G401 (cell line): ENCODE measurements at regions of chr1 and their contacts with region 1.

Region 1: DNA sequence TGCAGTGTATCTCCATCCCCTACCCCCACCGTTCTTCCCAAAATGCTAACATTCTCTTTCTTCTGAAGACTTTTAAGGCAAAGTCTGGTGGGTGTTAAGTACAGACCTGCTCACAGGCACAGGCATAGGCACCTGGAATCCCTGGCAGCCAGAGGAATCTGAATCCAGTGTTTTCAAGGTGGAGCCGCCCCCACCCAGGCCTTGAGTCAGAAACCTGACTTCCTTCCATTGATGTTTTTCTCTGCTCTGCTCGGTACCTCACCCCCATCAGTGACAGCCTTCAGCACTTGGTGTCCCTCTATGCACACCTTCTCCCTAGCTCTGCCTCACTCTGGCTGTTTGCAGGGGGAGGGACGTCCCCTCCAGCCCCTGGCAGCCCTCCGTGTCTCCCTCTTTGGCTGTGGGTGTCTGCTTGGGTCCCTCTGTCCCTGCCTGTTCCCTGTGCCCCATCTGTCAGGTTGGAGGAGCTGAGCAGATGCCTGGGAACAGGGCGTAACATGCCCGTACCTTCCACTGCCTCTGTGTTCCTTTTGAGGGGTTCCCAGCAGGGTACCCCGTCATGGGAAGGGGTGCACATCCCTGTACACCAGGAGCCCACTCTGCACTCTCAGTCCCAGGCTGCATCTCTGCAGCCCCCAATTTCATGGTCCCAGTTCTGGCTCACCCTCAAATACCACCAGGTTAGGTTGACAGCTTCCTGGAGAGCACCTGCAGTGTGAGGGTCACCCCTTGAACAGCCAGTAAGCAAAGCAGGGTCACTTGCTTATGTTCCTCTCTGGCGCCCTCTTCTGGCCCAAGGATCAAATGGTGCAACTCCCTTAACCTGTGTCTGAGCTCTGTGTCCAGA is 6.7 kb downstream of the NCDN start:
- DNase-seq: peak; percentile 79

Region 2: DNA sequence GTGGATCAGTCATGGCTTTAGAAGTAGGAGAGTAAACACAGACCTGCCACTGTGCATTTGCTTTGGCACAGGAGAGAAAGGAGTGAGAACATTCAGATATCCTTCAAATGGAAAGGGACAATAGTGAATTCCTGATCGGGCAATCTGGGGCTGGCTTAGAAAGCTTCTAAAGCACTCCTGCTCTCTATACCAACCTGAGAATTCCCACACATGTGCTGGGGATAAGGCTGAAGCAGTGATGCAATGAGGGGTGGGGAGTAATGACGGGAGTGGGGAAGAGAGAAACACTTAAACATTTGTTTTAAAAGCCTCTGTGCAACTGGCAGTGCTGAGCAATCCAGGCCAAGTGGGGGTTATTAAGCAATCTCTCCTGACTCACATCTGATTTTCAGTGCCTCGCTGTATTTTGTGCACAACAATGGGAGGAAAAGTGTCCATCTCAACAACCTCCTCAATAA is 115.9 kb before region 1 on chr1:
- in situ Hi-C with region 1: loop called (anchors 10 kb)
- DNase-seq: no peak

Region 3: DNA sequence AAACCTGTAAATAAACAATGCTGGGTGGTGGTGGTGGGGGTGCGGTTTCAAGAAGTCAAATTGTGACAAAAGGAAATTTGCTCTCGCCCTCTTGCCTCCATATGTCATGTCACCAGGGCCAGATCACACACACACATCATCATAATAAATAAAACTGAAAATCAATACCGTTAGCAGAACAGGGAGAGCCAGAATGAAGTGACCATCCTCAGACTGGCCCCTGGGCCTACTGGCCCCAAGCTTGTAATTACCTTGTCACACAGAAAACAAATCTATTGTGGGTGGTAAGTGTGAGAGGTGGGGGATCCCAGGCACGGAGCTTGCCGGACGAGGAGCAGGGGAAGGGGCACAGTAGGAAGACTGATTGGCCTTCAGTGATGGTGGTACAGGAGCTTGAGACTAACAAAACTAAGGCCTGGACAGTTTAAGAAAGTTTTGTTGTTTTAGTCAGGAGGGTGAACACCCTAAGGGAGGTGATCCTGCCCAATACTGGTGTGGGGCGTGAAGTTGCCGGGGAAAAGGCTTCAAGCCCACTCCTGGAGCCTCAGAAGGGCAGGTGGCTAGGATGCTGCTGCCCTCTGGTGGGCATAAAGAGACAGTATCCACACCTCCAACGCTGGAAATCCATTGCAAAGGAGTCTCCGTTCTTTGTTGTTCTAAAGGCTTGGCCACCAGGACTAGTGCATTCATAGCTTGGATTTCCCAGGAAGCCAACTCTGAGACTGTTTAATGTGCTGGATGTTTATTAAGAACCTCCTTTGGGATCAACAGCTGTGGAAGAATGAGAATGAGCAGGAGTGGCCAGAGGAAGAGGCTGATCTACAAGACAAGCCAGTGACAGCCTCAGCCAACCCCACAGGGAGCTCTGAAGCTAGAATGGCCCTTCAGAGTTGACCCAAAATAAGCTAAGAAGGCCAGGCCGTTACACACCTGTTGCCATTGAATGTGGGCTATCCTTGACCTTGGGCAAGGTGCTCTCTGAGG is 162.5 kb after region 1 on chr1:
- in situ Hi-C with region 1: loop called (anchors 10 kb)
- DNase-seq: peak; percentile 84

Region 4: DNA sequence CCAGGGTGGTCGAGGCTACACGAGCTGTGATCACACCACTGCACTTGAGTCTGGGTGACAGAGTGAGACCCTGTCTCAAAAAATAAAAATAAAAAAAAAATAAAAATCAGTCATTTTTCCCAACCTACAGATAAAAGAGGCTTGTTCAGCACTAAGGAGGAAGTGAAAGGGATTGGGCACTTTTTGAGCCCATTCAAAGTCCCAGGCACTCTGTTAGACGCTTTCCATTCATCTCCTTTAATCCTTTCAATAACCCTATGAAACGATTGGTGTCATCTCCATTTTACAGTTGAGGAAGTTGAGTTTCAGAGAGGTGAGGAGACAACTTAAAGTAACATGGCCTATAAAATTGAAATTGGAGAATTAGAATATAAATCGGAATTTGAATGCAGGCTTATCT is 233.1 kb after region 1 on chr1:
- in situ Hi-C with region 1: no loop called
- DNase-seq: no peak